A549 (cell line): ENCODE measurements at regions of chr14 and their contacts with region 1.

Region 1: DNA sequence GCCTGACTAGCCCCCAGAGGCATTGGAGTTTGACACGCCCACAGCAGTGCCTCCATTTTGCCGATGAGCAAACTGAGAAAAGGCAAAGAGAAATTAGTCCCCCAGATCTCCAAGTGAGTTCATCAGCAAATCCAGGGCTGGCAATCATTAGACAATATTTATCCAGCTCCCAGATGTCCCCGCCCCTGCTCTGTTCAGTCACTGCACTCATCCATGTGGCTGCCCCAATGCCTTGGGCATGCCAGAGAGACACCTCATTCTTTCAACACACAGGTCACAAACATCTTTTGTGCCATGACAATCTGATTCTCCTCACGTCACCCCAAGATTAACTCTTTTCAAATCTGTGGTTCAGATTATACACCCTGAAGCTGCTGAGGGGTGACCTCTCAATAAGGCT is 43.5 kb downstream of the DPF3 start:
- DNase-seq: no peak
- ATAC-seq: no peak
- H3K4me3 ChIP-seq: no peak overlapping the region
- H3K27ac ChIP-seq: no peak overlapping the region
- H3K4me1 ChIP-seq: no peaks in the 10 kb centered on the region
- CTCF ChIP-seq: no peak
- EP300 ChIP-seq: no peak
- POLR2A ChIP-seq: no peak
- RAD21 ChIP-seq: no peak

Region 2: DNA sequence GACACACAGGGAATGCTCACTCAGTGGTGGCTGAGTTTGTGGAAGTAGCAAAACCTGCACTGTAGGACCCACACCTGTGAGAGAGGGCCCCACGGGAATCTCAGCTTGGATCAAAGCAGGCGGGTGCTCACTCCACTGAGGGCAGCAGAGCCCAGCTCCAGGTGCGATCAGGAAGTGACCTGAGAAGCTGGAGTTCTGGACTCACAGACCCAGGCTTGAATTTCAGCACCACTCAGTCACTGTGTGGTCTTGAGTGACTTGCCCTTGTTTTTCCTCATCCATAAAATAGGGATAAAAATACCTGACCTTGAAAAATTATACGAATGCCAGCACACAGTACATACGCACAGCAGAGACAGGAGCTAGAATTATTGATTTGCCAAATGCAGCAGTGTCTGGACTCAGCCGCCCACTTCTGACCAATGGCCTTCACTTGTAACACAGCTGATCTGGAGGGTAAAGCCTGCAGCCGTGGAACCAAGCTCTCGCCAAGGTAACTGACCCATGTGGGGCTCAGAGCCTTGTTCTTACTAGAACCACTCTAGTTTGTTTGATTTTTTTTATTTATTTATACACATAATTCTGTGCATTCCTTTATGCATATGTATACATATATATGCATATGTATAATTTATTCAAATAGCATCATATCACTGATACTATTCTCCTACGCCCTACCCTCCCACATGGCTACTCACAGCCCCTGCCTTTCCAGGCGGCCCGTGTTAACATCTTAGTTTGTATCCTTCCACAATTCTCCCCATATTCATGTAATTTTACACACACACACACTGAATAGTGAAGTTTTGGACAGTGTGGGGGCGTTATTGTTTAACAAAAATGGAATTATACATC is 10.4 kb before region 1 on chr14:
- CTCF ChIA-PET with region 1: interaction called, 10 read pairs
- POLR2A ChIA-PET with region 1: no interaction called
- DNase-seq: no peak
- ATAC-seq: no peak
- H3K4me3 ChIP-seq: no peak overlapping the region
- H3K27ac ChIP-seq: no peak overlapping the region
- H3K4me1 ChIP-seq: no peaks in the 10 kb centered on the region
- CTCF ChIP-seq: no peak
- EP300 ChIP-seq: no peak
- POLR2A ChIP-seq: no peak
- RAD21 ChIP-seq: no peak